HCT116 (cell line): ENCODE measurements at regions of chr3 and their contacts with region 1.

Region 1: GRCh38 chr3:168213920-168214319 is 118.2 kb upstream of the GOLIM4 start:
- DNase-seq: no peak
- ATAC-seq: no peak
- H3K4me3 ChIP-seq: no peak overlapping the region
- H3K27ac ChIP-seq: no peak overlapping the region
- H3K4me1 ChIP-seq: no peaks in the 10 kb centered on the region
- H3K27me3 ChIP-seq: no peaks in the 10 kb centered on the region
- CTCF ChIP-seq: no peak
- POLR2A ChIP-seq: no peak
- RAD21 ChIP-seq: no peak

Region 2: GRCh38 chr3:168267179-168267578 is 53.3 kb after region 1 on chr3:
- CTCF ChIA-PET with region 1: no interaction called
- POLR2A ChIA-PET with region 1: no interaction called
- RAD21 ChIA-PET with region 1: no interaction called
- intact Hi-C with region 1: no loop called
- DNase-seq: no peak
- ATAC-seq: no peak
- H3K4me3 ChIP-seq: no peak overlapping the region
- H3K27ac ChIP-seq: no peak overlapping the region
- H3K4me1 ChIP-seq: no peaks in the 10 kb centered on the region
- H3K27me3 ChIP-seq: 0 out of 2 replicates have a peak, but pooled peaks cover 5% of the 10 kb centered on the region
- CTCF ChIP-seq: no peak
- POLR2A ChIP-seq: no peak
- RAD21 ChIP-seq: no peak

Region 3: DNA sequence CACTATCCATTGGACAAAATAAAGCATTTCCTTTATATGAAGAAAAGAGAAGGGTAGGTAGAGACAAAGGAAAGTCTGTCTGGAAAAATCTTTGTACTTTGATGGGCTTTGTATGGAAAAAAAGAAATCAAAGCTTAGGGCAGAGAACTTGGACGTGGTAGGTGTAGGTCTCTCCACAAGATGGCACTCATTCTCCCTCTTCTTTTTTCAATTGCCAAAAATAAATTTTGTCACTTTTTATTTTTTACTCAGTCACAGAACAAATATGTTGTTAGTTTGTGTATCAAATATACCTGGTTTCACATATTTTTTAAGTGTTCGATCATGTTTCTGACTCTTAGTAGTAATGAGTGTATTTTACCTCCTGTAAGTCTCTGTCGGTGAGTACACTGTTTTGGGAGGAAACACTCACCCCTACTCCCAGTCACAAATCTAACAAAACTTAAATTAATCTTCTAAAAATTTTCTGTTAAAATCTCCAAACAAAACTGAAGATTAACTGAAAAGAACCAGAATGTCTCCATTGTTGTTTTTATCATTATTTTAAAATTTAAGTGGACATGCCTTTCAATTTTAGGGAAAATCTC is 297.6 kb after region 1 on chr3:
- CTCF ChIA-PET with region 1: interaction called, 4 read pairs
- POLR2A ChIA-PET with region 1: no interaction called
- RAD21 ChIA-PET with region 1: interaction called in 1 of 2 experiments, 5 read pairs
- intact Hi-C with region 1: loop called (anchors 5 kb)
- DNase-seq: no peak
- ATAC-seq: peak; percentile 60; the same call in 1 of the 2 replicates
- H3K4me3 ChIP-seq: no peak overlapping the region
- H3K27ac ChIP-seq: no peak overlapping the region
- H3K4me1 ChIP-seq: no peaks in the 10 kb centered on the region
- H3K27me3 ChIP-seq: peaks cover 4% of the 10 kb centered on the region
- CTCF ChIP-seq: peak; percentile 32 to 59 (median 57); a peak in 5 of 6 replicates
- POLR2A ChIP-seq: no peak
- RAD21 ChIP-seq: peak; percentile 53

Region 4: GRCh38 chr3:168620826-168621225 is 406.9 kb after region 1 on chr3:
- CTCF ChIA-PET with region 1: interaction called, 33 read pairs
- POLR2A ChIA-PET with region 1: no interaction called
- RAD21 ChIA-PET with region 1: interaction called, 3 read pairs
- intact Hi-C with region 1: loop called (anchors 1 kb)
- DNase-seq: peak; percentile 27
- ATAC-seq: peak; percentile 95
- H3K4me3 ChIP-seq: no peak overlapping the region
- H3K27ac ChIP-seq: no peak overlapping the region
- H3K4me1 ChIP-seq: no peaks in the 10 kb centered on the region
- H3K27me3 ChIP-seq: peaks cover 24% of the 10 kb centered on the region
- CTCF ChIP-seq: peak; percentile 57 to 67 (median 66); a peak in 5 of 6 replicates
- POLR2A ChIP-seq: no peak
- RAD21 ChIP-seq: peak; percentile 66

Region 5: GRCh38 chr3:168738527-168739325 is 524.8 kb after region 1 on chr3:
- CTCF ChIA-PET with region 1: no interaction called
- POLR2A ChIA-PET with region 1: no interaction called
- RAD21 ChIA-PET with region 1: no interaction called
- intact Hi-C with region 1: no loop called
- DNase-seq: no peak
- ATAC-seq: no peak
- H3K4me3 ChIP-seq: no peak overlapping the region
- H3K27ac ChIP-seq: no peak overlapping the region
- H3K4me1 ChIP-seq: no peaks in the 10 kb centered on the region
- H3K27me3 ChIP-seq: no peaks in the 10 kb centered on the region
- CTCF ChIP-seq: no peak
- POLR2A ChIP-seq: no peak
- RAD21 ChIP-seq: no peak

Region 6: DNA sequence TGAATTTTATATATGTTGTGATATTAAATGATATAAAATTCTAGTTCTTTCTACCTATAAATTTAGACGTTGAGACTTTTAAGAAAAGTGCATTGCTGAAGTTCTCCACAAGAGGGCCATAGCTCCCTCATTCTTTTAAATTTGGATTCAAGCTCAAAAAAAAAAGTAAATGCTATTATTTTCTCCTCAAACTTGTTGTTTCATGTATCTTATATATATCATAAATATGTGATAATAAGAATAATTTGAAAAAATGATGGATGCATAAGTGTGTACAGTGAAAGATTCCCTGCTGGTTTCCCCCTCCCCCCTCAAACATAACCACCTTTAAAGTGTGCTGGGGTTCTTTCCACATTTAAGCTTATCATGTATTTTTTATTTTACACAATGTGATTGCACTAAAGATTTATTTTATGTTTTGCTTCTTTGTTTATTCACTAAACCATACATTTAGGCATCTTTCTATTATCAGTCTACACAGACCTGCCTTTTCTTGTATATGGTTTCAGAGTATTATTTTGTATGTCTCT is 651.2 kb after region 1 on chr3:
- CTCF ChIA-PET with region 1: interaction called, 11 read pairs
- POLR2A ChIA-PET with region 1: no interaction called
- RAD21 ChIA-PET with region 1: no interaction called
- intact Hi-C with region 1: no loop called
- DNase-seq: no peak
- ATAC-seq: no peak
- H3K4me3 ChIP-seq: no peak overlapping the region
- H3K27ac ChIP-seq: no peak overlapping the region
- H3K4me1 ChIP-seq: no peaks in the 10 kb centered on the region
- H3K27me3 ChIP-seq: peaks cover 16% of the 10 kb centered on the region
- CTCF ChIP-seq: peak; percentile 52 to 65 (median 61)
- POLR2A ChIP-seq: no peak
- RAD21 ChIP-seq: peak; percentile 60